GM12878 (cell line): ENCODE measurements at regions of chr12 and their contacts with region 1.

Region 1: GRCh38 chr12:121657305-121658008 is 12.0 kb downstream of the MORN3 start:
- DNase-seq: no peak
- ATAC-seq: no peak
- H3K4me3 ChIP-seq: no peak overlapping the region
- H3K27ac ChIP-seq: no peak overlapping the region
- H3K4me1 ChIP-seq: peaks cover 25% of the 10 kb centered on the region
- H3K27me3 ChIP-seq: no peaks in the 10 kb centered on the region
- CTCF ChIP-seq: no peak
- EP300 ChIP-seq: no peak
- POLR2A ChIP-seq: no peak
- RAD21 ChIP-seq: no peak

Region 2: DNA sequence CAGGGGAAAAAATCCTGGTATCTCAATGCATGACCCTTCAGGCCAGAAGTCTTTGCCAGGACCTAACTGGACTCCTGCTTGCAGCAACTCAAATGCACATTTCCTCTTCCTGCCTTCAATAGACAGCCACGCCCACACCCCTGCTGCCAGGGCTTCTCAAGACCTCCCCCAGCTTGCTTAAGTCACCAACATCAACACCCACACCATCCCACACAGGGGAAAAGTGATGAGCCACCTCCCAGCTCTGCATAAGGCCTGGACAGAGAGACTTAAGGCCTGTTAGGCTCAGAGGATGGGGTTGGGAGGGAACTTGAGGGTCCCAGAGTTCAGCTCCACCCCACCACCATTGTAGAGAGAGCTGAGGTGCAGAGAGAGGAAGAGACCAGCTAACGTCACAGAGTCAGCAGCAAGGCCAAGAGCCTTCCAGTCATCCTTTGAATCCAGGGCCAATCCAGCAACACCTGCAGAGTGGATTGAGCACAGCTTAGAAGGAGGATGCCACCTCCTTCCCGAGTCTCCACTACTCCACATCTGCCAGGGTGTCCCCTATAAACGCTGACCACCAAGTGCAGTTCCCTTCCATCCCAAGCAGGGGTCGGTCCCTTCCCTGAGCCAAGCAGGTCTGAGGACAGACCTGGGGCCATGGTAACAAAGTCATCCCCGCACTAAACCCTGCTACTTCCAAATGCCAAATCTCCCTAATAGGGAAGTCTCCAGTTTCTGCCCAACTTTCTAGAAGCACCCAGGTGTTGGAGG is 126.7 kb before region 1 on chr12:
- CTCF ChIA-PET with region 1: no interaction called
- POLR2A ChIA-PET with region 1: interaction called, 10 read pairs
- RAD21 ChIA-PET with region 1: no interaction called
- SMC1A ChIA-PET with region 1: no interaction called
- in situ Hi-C with region 1: no loop called
- intact Hi-C with region 1: no loop called
- DNase-seq: no peak
- ATAC-seq: peak; percentile 71
- H3K4me3 ChIP-seq: peak overlapping the region; percentile 63; the same call in 1 of the 2 replicates
- H3K27ac ChIP-seq: peak overlapping the region; percentile 9; the same call in 1 of the 2 replicates
- H3K4me1 ChIP-seq: peaks cover 20% of the 10 kb centered on the region
- H3K27me3 ChIP-seq: no peaks in the 10 kb centered on the region
- CTCF ChIP-seq: no peak
- EP300 ChIP-seq: no peak
- POLR2A ChIP-seq: peak; percentile 28; the same call in 1 of the 2 replicates
- RAD21 ChIP-seq: no peak

Region 3: DNA sequence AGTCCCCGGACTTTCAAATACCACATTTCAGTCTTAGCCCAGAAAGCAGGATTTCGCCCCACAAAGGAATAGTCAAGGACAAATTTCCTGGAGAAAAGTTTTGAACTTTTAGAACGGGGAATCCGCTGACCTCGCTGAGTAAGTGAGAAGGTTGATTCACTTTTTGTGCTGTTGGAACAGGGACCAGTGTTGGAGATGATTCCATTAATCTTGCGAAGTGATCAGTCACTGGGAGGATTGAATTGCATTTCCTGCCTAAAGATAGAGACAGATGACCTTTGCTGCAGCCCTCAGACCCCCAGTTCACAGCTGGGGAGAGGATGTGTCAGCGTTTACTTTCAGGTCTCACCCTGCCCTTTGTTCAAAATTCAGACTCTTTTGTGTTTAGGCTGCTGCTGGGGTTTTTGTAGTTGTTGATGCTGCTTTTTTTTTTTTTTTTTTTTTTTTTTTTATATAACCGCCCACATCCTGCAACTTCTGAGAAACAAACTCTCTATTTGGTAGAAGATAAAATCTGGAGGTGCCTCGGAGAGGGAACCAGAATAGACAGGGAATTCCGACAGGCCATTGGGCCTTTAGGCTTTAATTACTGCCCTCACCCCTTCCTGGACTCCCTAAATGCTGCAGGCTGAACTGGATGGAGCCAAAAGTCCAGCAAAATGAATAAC is 66.8 kb before region 1 on chr12:
- CTCF ChIA-PET with region 1: no interaction called
- POLR2A ChIA-PET with region 1: interaction called, 3 read pairs
- RAD21 ChIA-PET with region 1: no interaction called
- SMC1A ChIA-PET with region 1: interaction called, 3 read pairs
- in situ Hi-C with region 1: no loop called
- intact Hi-C with region 1: loop called (anchors 2 kb)
- DNase-seq: peak; percentile 74
- ATAC-seq: peak; percentile 91
- H3K4me3 ChIP-seq: peak overlapping the region; percentile 61
- H3K27ac ChIP-seq: peak overlapping the region; percentile 82
- H3K4me1 ChIP-seq: peaks cover 10% of the 10 kb centered on the region
- H3K27me3 ChIP-seq: no peaks in the 10 kb centered on the region
- CTCF ChIP-seq: no peak
- EP300 ChIP-seq: peak in 1 of 2 experiments; percentile 62; a peak in 1 of 4 replicates
- POLR2A ChIP-seq: peak; percentile 63
- RAD21 ChIP-seq: no peak

Region 4: GRCh38 chr12:121637231-121637914 is 20.1 kb before region 1 on chr12:
- CTCF ChIA-PET with region 1: interaction called, 17 read pairs
- POLR2A ChIA-PET with region 1: interaction called, 4 read pairs
- RAD21 ChIA-PET with region 1: no interaction called
- SMC1A ChIA-PET with region 1: interaction called, 7 read pairs
- in situ Hi-C with region 1: no loop called
- intact Hi-C with region 1: no loop called
- DNase-seq: no peak
- ATAC-seq: peak; percentile 90
- H3K4me3 ChIP-seq: 0 out of 2 replicates have a peak overlapping the region, but pooled peaks have one; percentile 17
- H3K27ac ChIP-seq: peak overlapping the region; percentile 84
- H3K4me1 ChIP-seq: peaks cover 20% of the 10 kb centered on the region
- H3K27me3 ChIP-seq: no peaks in the 10 kb centered on the region
- CTCF ChIP-seq: no peak
- EP300 ChIP-seq: no peak
- POLR2A ChIP-seq: peak; percentile 71
- RAD21 ChIP-seq: no peak

Region 5: DNA sequence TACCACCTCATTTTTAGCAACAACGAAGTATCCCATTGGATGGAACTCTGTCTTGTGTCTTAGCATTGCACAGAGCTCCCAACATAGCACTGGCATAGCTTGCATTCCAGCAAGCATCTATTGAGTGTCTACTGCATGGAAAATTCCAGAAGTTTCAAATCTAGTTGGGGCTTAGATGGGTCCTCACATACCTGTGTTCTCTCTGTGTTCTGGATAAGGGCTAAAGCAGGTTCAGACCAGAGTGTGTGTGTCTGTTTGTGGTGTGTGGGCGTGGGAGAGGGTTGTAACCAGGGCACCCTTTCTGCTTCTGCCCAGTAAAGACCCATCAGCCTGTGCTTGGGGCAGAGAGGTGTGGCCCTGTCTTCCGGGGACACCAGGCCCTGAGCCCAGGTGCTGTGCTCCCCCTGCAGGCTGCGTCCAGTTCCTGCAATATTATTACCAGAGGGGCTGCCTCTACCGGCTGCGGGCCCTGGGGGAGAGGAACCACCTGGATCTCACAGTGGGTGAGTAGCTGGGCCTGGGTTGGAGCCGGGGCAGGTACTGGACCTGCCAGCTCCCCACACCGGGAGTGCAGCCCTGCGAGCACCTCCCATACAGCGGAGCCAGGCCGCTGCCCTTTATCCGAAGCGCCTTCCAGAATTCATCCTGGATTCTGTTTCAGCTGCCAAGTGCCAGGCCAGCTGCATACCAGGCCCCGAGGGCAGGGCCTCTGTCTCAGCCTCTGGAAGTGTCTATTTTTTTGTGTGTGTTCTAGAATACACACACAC is 115.7 kb after region 1 on chr12:
- CTCF ChIA-PET with region 1: no interaction called
- POLR2A ChIA-PET with region 1: no interaction called
- RAD21 ChIA-PET with region 1: no interaction called
- SMC1A ChIA-PET with region 1: no interaction called
- in situ Hi-C with region 1: no loop called
- intact Hi-C with region 1: no loop called
- DNase-seq: no peak
- ATAC-seq: peak; percentile 91
- H3K4me3 ChIP-seq: no peak overlapping the region
- H3K27ac ChIP-seq: no peak overlapping the region
- H3K4me1 ChIP-seq: peaks cover 7% of the 10 kb centered on the region; the same call in 1 of the 2 replicates
- H3K27me3 ChIP-seq: no peaks in the 10 kb centered on the region
- CTCF ChIP-seq: peak; percentile 92 to 95 (median 94); a peak in 5 of 6 replicates
- EP300 ChIP-seq: no peak
- POLR2A ChIP-seq: no peak
- RAD21 ChIP-seq: peak; percentile 97